Breast epithelium (tissue), 4 donors: ENCODE measurements at regions of chr12 and their contacts with region 1.

Region 1: GRCh38 chr12:106027911-106028310 is 110.8 kb downstream of the NUAK1 start:
- DNase-seq: no peak
- H3K4me3 ChIP-seq: no peak overlapping the region
- H3K27ac ChIP-seq: no peak overlapping the region
- H3K4me1 ChIP-seq: no peaks in the 10 kb centered on the region
- H3K27me3 ChIP-seq: no peaks in the 10 kb centered on the region
- CTCF ChIP-seq: no peak
- POLR2A ChIP-seq: no peak

Region 2: GRCh38 chr12:105474672-105475071 is 553.2 kb before region 1 on chr12:
- intact Hi-C with region 1: no loop called
- DNase-seq: no peak
- H3K4me3 ChIP-seq: no peak overlapping the region
- H3K27ac ChIP-seq: no peak overlapping the region
- H3K4me1 ChIP-seq: no peaks in the 10 kb centered on the region
- H3K27me3 ChIP-seq: no peaks in the 10 kb centered on the region
- CTCF ChIP-seq: no peak
- POLR2A ChIP-seq: no peak

Region 3: GRCh38 chr12:105960319-105961083 is 67.4 kb before region 1 on chr12:
- intact Hi-C with region 1: loop called (anchors 2 kb)
- DNase-seq: peak in 1 of 2 donors; percentile 75
- H3K4me3 ChIP-seq: no peak overlapping the region
- H3K27ac ChIP-seq: peak overlapping the region in 1 of 2 donors; percentile 25
- H3K4me1 ChIP-seq: peaks cover 0 to 16% of the 10 kb centered on the region in 2 donors
- H3K27me3 ChIP-seq: no peaks in the 10 kb centered on the region
- CTCF ChIP-seq: no peak
- POLR2A ChIP-seq: no peak